ENCODE measurements at regions of chr11 and their contacts with region 1.

Region 1: DNA sequence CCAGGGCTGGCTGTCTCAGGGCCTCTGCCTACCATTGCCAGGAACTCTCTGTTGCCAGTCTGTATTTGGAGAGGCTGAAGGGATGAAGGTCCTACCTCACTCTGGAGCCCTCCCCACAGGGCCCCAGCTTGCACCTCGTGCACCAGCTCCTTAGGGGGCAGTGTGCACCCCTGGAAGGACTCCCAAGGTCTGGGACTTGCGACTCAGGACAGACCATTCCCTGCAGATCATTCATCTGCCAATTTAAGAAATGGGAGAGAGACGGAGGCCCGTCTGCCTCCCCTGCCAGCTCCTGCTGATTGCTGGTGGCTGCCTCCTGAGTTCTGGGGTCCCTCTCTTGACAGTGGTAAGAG is 27.5 kb upstream of the MALAT1 start:
- DNase-seq: peak; percentile 76
- H3K4me3 Mint-ChIP-seq: peak overlapping the region; percentile 75
- H3K27ac Mint-ChIP-seq: peak overlapping the region; percentile 96
- H3K4me1 Mint-ChIP-seq: peaks cover 32% of the 10 kb centered on the region
- H3K27me3 Mint-ChIP-seq: no peaks in the 10 kb centered on the region

Region 2: GRCh38 chr11:65301491-65302329 is 169.7 kb before region 1 on chr11:
- intact Hi-C with region 1: no loop called
- DNase-seq: no peak
- H3K4me3 Mint-ChIP-seq: no peak overlapping the region
- H3K27ac Mint-ChIP-seq: no peak overlapping the region
- H3K4me1 Mint-ChIP-seq: no peaks in the 10 kb centered on the region
- H3K27me3 Mint-ChIP-seq: no peaks in the 10 kb centered on the region

Region 3: DNA sequence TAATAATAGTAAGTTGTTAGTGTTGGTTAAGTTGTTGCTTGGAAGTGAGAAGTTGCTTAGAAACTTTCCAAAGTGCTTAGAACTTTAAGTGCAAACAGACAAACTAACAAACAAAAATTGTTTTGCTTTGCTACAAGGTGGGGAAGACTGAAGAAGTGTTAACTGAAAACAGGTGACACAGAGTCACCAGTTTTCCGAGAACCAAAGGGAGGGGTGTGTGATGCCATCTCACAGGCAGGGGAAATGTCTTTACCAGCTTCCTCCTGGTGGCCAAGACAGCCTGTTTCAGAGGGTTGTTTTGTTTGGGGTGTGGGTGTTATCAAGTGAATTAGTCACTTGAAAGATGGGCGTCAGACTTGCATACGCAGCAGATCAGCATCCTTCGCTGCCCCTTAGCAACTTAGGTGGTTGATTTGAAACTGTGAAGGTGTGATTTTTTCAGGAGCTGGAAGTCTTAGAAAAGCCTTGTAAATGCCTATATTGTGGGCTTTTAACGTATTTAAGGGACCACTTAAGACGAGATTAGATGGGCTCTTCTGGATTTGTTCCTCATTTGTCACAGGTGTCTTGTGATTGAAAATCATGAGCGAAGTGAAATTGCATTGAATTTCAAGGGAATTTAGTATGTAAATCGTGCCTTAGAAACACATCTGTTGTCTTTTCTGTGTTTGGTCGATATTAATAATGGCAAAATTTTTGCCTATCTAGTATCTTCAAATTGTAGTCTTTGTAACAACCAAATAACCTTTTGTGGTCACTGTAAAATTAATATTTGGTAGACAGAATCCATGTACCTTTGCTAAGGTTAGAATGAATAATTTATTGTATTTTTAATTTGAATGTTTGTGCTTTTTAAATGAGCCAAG is 46.0 kb before region 1 on chr11:
- intact Hi-C with region 1: loop called (anchors 2 kb)
- DNase-seq: peak; percentile 93
- H3K4me3 Mint-ChIP-seq: peak overlapping the region; percentile 100
- H3K27ac Mint-ChIP-seq: peak overlapping the region; percentile 100
- H3K4me1 Mint-ChIP-seq: peaks cover 67% of the 10 kb centered on the region
- H3K27me3 Mint-ChIP-seq: peaks cover 7% of the 10 kb centered on the region

Region 4: DNA sequence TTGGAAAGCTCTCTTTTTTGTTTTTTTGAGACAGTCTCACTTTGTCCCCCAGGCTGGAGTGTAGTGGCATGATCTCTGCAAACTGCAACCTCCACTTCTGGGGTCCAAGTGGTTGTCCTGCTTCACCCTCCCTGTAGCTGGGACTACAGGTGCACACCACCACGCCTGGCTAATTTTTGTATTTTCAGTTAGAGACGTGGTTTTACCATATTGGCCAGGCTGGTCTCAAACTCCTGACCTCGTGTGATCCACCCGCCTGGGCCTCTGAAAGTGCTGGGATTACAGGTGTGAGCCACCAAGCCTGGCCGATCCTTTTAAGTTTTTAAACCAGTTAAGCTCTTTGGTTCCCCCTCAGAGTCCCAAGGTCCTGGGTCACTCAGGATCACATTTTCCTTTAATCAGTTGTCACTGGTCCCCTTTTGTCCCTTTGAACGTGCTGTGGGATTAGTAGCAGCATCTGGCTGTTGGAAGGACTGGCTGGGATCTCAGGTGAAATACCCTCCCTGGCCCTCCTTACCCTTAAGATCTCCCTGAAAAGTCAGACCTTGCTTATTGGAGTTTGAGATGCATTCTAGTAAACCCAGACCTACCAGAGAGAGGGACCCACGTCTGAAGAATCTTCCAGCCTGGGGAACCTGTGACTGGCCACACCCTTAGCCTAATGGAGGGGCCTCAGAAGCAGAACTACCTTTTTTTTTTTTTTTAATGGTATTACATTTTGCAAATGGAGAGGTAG is 35.6 kb after region 1 on chr11:
- intact Hi-C with region 1: loop called (anchors 5 kb)
- DNase-seq: peak; percentile 81
- H3K4me3 Mint-ChIP-seq: no peak overlapping the region
- H3K27ac Mint-ChIP-seq: peak overlapping the region; percentile 92
- H3K4me1 Mint-ChIP-seq: peaks cover 55% of the 10 kb centered on the region
- H3K27me3 Mint-ChIP-seq: no peaks in the 10 kb centered on the region